Activated CD8-positive, alpha-beta T cell treated with anti-CD3 and anti-CD28 coated beads, Interleukin-2, amount 10 ng/mL, durations not matched to agents 7 days and 5 days (primary cell): ENCODE measurements at regions of chr9 and their contacts with region 1.

Region 1: DNA sequence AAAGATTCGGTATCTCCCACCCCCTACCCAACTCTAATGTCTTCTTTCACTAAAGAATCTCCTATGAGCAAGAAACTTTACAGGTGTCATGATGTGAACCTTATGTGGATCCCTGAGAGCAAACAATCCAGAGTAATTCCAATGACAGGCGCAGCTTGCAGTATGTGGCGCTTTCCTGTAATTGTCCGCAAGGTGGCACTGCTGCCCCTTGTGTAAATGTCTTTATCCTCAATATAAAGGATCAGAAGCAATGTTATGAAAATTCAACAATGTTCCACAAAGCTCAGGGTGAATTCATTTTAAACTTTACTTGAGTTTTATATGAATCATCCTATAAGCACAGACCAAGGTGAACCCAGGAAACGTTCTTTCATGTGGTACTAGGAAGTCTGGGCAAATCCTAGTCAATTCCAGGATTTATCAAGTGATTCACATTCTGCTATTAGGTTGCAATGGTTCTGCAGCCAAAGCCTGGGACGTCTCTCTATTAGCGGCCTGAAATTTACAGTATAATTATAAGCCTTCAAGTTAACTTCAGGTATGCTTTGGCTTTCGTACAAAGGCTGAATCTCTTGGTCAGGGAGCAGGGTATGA is 113.7 kb downstream of the TRPM6 start:
- DNase-seq: peak; percentile 81
- ATAC-seq: peak; percentile 73
- H3K4me3 Mint-ChIP-seq: no peak overlapping the region
- H3K27ac Mint-ChIP-seq: no peak overlapping the region
- H3K4me1 Mint-ChIP-seq: no peaks in the 10 kb centered on the region
- H3K27me3 Mint-ChIP-seq: peaks cover 3% of the 10 kb centered on the region

Region 2: DNA sequence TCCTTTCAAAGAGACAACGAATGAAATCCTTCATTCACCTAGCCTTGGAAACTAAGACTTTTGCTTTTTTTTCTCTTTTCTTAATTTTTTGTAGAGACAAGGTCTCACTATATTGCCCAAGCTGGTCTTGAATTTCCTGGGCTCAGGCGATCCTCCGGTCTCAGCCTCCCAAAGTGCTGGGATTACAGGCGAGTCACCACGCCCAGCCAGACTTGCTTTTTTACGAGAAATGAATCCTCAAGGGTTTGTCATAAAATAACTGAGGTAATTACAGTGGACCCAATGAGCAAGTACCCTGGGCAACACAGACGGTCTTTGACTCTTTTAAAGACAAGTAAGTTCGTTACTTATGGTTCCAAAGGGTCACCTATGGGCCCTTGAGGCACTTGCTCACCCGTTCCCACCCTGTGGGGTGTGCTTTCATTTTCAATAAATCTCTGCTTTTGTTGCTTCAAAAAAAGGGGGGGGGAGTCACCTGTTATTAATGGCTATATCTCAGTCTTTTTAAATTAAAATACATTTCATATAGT is 43.4 kb after region 1 on chr9:
- CTCF ChIA-PET with region 1: no interaction called
- POLR2A ChIA-PET with region 1: no interaction called
- DNase-seq: no peak
- ATAC-seq: no peak
- H3K4me3 Mint-ChIP-seq: no peak overlapping the region
- H3K27ac Mint-ChIP-seq: no peak overlapping the region
- H3K4me1 Mint-ChIP-seq: no peaks in the 10 kb centered on the region
- H3K27me3 Mint-ChIP-seq: peaks cover 2% of the 10 kb centered on the region

Region 3: GRCh38 chr9:75001719-75002422 is 227.9 kb after region 1 on chr9:
- CTCF ChIA-PET with region 1: interaction called, 158 read pairs
- POLR2A ChIA-PET with region 1: no interaction called
- DNase-seq: peak; percentile 30
- ATAC-seq: peak; percentile 93
- H3K4me3 Mint-ChIP-seq: no peak overlapping the region
- H3K27ac Mint-ChIP-seq: no peak overlapping the region
- H3K4me1 Mint-ChIP-seq: no peaks in the 10 kb centered on the region
- H3K27me3 Mint-ChIP-seq: no peaks in the 10 kb centered on the region

Region 4: GRCh38 chr9:75027187-75028107 is 253.5 kb after region 1 on chr9:
- CTCF ChIA-PET with region 1: interaction called, 10 read pairs
- POLR2A ChIA-PET with region 1: no interaction called
- DNase-seq: peak; percentile 65
- ATAC-seq: peak; percentile 43
- H3K4me3 Mint-ChIP-seq: peak overlapping the region; percentile 95
- H3K27ac Mint-ChIP-seq: peak overlapping the region; percentile 98
- H3K4me1 Mint-ChIP-seq: peaks cover 44% of the 10 kb centered on the region
- H3K27me3 Mint-ChIP-seq: no peaks in the 10 kb centered on the region

Region 5: GRCh38 chr9:75072895-75073294 is 298.9 kb after region 1 on chr9:
- CTCF ChIA-PET with region 1: interaction called, 32 read pairs
- POLR2A ChIA-PET with region 1: no interaction called
- DNase-seq: no peak
- ATAC-seq: no peak
- H3K4me3 Mint-ChIP-seq: no peak overlapping the region
- H3K27ac Mint-ChIP-seq: no peak overlapping the region
- H3K4me1 Mint-ChIP-seq: peaks cover 17% of the 10 kb centered on the region
- H3K27me3 Mint-ChIP-seq: no peaks in the 10 kb centered on the region